Activated CD4-positive, alpha-beta T cell treated with anti-CD3 and anti-CD28 coated beads for 36 hours (primary cell): ENCODE measurements at regions of chr1 and their contacts with region 1.

Region 1: DNA sequence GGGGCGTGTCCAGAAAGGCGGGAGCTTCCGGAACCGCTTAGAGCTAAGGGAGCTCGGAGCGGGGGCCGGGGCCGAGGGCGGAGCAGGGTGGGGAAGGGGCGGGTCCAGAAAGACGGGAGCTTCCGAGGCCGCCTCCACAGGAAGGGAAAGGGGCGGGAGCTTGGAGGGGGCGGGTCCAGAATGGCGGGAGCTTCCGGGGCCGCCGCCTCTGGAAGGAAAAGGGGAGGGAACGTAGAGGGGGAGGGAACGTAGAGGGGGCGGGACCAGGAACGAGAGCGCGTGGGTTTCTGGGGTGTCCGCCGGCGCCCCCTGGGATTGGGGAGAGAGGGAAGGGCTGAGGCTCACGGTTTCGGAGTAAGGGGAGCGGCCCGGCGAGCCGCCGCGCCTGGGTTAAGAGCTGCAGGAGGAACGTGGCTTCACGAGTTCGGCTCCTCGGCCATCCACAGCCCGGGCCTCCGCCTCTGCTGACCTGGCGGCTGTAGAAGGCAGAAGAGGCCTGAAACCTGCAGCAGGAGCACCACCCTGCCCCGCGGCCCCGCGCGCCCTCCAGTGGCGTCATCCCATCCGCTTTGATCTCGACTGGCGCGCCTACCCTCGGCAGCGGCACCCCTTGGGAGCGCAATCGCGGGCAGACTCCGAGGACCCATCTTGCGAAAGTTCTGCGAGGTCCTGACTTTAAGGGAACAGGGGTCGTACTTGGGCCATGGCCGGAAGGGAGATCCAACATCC is 22.9 kb upstream of the HPDL start:
- DNase-seq: peak; percentile 100
- ATAC-seq: peak; percentile 83
- H3K4me3 Mint-ChIP-seq: peak overlapping the region; percentile 84
- H3K27ac Mint-ChIP-seq: peak overlapping the region; percentile 95
- H3K4me1 Mint-ChIP-seq: peaks cover 44% of the 10 kb centered on the region
- H3K27me3 Mint-ChIP-seq: no peaks in the 10 kb centered on the region

Region 2: GRCh38 chr1:44354840-44355581 is 948.7 kb before region 1 on chr1 and contains the start of gene ERI3:
- CTCF ChIA-PET with region 1: no interaction called
- POLR2A ChIA-PET with region 1: no interaction called
- intact Hi-C with region 1: loop called in 1 of 2 experiments (anchors 10 kb)
- DNase-seq: peak; percentile 98
- ATAC-seq: peak; percentile 100
- H3K4me3 Mint-ChIP-seq: peak within 1 kb of the TSS; percentile 90
- H3K27ac Mint-ChIP-seq: peak within 1 kb of the TSS; percentile 82
- H3K4me1 Mint-ChIP-seq: peaks cover 34% of the 10 kb centered on the region
- H3K27me3 Mint-ChIP-seq: no peaks in the 10 kb centered on the region
- total RNA-seq, gene ERI3: 36.7 to 41.3 TPM

Region 3: DNA sequence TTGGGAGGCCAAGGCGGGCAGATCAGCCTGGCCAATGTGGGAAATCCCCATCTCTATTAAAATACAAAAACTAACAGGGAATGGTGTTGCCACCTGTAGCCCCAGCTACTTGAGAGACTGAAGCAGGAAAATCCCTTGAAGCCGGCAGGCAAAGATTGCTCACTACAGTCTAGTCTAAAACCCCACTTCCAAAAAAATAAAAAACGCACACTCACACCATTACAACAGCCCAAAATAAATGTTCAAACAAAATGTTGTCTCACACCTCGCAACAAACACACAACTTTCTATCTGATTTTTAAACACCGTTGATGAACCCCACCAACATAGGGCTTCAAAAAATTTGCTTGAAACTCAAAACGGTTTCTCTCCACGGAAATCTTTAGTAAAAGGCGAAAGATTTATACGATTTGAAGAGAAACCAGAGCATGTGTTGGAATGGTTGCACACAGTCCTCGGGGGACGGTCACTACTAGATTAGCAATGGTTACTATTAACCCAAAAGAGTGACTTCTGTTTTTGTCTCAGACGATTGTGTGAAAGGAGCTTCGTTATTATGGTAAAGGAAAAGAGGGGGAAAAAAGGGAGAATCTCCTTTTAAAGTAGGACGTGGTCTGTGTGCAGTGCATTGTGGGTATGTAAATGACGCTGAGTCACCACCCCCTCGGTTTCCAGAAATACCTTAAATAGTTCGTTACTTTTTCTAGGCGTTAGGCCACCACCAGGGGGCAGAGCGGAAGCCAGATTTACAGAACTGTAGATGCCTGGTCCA is 572.8 kb before region 1 on chr1 and contains the start of gene RNU5D-1:
- CTCF ChIA-PET with region 1: interaction called, 4 read pairs
- POLR2A ChIA-PET with region 1: interaction called, 8 read pairs
- intact Hi-C with region 1: loop called in 1 of 2 experiments (anchors 1 kb)
- DNase-seq: peak; percentile 98
- ATAC-seq: peak; percentile 85
- H3K4me3 Mint-ChIP-seq: peak within 1 kb of the TSS; percentile 67
- H3K27ac Mint-ChIP-seq: peak within 1 kb of the TSS; percentile 100
- H3K4me1 Mint-ChIP-seq: peaks cover 45% of the 10 kb centered on the region
- H3K27me3 Mint-ChIP-seq: no peaks in the 10 kb centered on the region
- total RNA-seq, gene RNU5D-1: not detected

Region 4: DNA sequence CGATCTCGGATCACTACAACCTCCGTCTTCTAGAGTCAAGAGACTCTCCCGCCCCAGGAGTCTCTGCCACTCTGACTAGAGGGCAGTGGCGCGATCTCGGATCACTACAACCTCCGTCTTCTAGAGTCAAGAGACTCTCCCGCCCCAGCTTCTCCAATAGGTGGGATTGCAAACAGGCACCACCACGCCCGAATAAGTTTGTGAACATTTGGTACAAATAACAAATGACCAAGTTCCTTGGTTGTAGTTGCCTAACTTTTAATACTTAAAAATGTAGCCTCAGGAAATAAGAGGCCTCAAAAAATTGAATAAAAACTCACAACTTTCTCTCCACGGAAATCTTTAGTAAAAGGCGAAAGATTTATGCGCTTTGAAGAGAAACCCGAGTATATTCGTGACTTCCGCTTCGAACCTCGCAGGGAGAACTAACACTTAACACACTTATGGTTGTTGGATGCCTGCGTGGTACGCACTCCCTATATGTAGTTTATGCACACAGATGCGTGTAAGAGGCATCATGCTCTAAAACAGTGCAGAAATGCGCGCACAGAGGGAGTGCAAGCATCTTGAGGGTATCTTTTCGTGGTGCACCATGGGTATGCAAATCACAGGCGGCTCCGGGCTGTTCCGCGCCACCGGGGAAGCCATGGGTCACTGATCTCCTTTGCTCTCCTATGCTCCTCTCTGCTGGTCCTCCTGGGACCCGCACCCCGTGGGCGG is 484.0 kb before region 1 on chr1:
- CTCF ChIA-PET with region 1: no interaction called
- POLR2A ChIA-PET with region 1: interaction called, 14 read pairs
- intact Hi-C with region 1: loop called in 1 of 2 experiments (anchors 1 kb)
- DNase-seq: peak; percentile 88
- ATAC-seq: peak; percentile 88
- H3K4me3 Mint-ChIP-seq: peak overlapping the region; percentile 85
- H3K27ac Mint-ChIP-seq: peak overlapping the region; percentile 100
- H3K4me1 Mint-ChIP-seq: peaks cover 37% of the 10 kb centered on the region
- H3K27me3 Mint-ChIP-seq: no peaks in the 10 kb centered on the region

Region 5: DNA sequence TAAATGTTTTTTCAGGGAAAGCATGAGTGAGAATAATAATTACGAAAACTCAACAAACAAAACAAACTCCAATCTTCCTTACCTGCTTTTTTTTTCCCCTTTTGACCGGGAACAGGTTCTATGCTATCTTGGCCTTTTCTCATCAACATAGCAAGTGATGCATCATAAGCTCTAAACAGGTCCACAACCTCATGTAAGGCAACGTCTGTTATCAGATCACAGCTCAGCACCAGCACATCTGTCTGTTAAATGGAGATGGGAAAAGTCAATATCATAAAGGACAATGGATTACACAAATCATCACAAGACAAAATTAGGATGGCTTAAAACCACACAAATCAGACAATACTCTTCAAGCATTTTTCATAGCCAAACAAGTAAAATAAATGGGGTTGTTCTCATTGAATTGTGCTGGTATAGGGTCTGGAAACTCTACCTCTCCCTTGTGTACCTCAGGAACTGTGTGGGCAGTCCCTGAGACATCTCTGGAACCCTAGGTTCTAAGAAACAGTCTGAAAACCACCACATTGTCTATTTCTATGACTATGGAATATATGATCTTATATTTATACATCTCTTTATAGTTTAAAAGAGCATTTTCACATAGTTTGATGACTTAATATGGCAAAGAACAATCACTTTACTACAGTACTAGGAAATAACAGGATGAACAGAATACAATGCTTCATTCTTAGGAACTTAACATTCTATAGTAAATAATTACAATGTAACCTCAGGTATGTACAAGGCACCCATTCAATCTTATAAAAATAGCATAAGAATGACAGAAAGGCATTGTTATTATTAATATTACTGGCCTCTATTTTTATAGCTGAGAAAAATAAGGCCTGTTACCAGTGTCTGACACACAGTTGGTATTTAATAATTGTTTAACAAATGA is 362.1 kb before region 1 on chr1:
- CTCF ChIA-PET with region 1: no interaction called
- POLR2A ChIA-PET with region 1: no interaction called
- intact Hi-C with region 1: no loop called
- DNase-seq: peak; percentile 31
- ATAC-seq: peak; percentile 95
- H3K4me3 Mint-ChIP-seq: no peak overlapping the region
- H3K27ac Mint-ChIP-seq: peak overlapping the region; percentile 62
- H3K4me1 Mint-ChIP-seq: peaks cover 14% of the 10 kb centered on the region
- H3K27me3 Mint-ChIP-seq: no peaks in the 10 kb centered on the region

Region 6: DNA sequence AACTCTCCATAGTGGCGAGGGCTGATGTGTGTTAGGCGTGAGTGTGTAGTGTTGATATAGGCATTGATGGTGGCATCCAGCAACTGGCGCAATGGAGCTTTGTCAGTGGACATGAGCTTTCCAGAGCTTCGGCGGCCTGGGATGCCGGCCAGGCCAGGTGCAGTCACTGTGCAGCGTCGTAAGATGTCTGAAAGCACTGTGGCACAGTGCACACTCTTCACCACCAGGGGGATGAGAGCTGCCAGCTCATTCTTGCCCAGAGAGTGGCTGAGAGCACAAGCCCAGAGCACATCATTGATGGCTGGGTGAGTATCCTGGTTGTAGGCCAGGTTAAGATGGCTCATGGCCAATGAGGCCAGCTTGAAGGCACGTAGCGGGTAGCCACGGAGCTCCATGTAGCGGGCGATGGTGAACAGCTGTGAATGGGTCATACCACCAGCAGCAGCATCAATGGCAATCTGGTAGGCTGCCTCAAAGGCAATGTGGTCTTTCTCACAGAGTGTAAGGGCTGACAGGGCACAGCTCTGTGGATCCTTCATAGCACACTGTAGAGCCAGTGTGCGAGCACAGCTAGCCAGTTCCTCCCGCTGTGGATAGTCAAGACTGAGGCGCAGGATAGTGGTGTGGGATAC is 285.0 kb before region 1 on chr1:
- CTCF ChIA-PET with region 1: interaction called, 255 read pairs
- POLR2A ChIA-PET with region 1: interaction called, 33 read pairs
- intact Hi-C with region 1: loop called (anchors 1 kb)
- DNase-seq: peak; percentile 81
- ATAC-seq: peak; percentile 95
- H3K4me3 Mint-ChIP-seq: no peak overlapping the region
- H3K27ac Mint-ChIP-seq: no peak overlapping the region
- H3K4me1 Mint-ChIP-seq: peaks cover 13% of the 10 kb centered on the region
- H3K27me3 Mint-ChIP-seq: no peaks in the 10 kb centered on the region

Region 7: GRCh38 chr1:45326627-45327623 is 23.2 kb after region 1 on chr1 and contains the start of gene HPDL:
- CTCF ChIA-PET with region 1: interaction called, 14 read pairs
- POLR2A ChIA-PET with region 1: interaction called, 4 read pairs
- intact Hi-C with region 1: loop called (anchors 1 kb)
- DNase-seq: peak; percentile 84
- ATAC-seq: peak; percentile 87
- H3K4me3 Mint-ChIP-seq: peak within 1 kb of the TSS; percentile 82
- H3K27ac Mint-ChIP-seq: peak within 1 kb of the TSS; percentile 80
- H3K4me1 Mint-ChIP-seq: peaks cover 23% of the 10 kb centered on the region
- H3K27me3 Mint-ChIP-seq: no peaks in the 10 kb centered on the region
- total RNA-seq, gene HPDL: 12.7 to 17.9 TPM

Region 8: DNA sequence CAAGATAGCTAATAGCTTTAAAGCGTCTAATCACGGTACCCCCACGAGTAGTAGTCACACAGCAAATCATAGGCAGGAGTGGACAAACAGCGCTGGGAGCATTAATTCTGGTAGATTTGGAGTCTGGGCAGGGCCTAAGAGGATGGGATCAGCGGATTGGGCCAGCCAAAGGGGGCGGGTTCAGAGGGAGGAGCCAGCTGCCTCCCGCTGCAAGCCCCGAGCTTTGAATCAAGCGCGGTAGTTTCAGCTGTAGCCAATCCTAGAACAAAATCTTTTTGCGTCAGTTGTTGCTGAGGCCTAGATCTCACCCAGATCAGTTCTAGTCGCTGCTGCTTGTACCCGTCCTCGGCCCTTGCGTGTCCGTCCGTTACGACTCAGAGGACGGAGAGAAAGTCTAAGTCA is 279.5 kb after region 1 on chr1:
- CTCF ChIA-PET with region 1: interaction called, 3 read pairs
- POLR2A ChIA-PET with region 1: interaction called, 4 read pairs
- intact Hi-C with region 1: loop called in 1 of 2 experiments (anchors 1 kb)
- DNase-seq: peak; percentile 97
- ATAC-seq: peak; percentile 84
- H3K4me3 Mint-ChIP-seq: peak overlapping the region; percentile 91
- H3K27ac Mint-ChIP-seq: peak overlapping the region; percentile 100
- H3K4me1 Mint-ChIP-seq: peaks cover 20% of the 10 kb centered on the region
- H3K27me3 Mint-ChIP-seq: no peaks in the 10 kb centered on the region